Activated CD4-positive, alpha-beta T cell treated with anti-CD3 and anti-CD28 coated beads for 36 hours (primary cell): ENCODE measurements at regions of chr15 and their contacts with region 1.

Region 1: DNA sequence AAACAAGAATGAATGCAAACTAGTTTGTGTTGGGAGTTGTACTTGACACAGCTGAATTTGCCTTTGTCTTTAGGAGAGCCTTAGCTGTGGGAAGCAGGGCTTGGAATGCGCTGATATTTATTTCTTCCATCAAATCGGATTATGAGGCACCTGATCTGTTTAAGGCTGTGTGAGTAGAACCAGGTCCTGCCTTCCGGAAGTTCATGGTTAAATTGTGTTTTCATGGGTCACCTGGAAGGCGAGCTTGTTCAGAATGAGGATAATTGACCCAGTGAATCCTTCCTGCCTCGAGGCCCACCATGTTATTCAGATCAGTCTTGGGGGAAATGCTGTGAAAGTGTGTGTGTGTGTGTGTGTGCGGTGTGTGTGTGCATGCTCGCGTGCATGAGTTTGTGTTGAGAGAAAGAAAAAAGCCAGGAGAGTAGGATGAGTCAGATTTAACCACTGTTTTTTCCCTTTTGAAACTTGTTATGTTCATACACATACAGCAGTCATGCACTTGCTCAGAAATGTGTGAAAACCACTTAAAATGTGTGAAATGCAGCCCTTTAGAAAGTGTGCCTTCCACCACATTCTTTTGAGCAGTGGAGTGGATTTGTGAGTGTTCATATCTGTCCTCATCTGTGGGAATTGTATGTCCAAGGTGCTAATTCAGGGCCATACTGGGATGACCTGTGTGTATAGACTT is 36.7 kb downstream of the SMAD3 start:
- DNase-seq: peak; percentile 65
- ATAC-seq: peak; percentile 40
- H3K4me3 Mint-ChIP-seq: no peak overlapping the region
- H3K27ac Mint-ChIP-seq: no peak overlapping the region
- H3K4me1 Mint-ChIP-seq: peaks cover 32% of the 10 kb centered on the region
- H3K27me3 Mint-ChIP-seq: no peaks in the 10 kb centered on the region

Region 2: DNA sequence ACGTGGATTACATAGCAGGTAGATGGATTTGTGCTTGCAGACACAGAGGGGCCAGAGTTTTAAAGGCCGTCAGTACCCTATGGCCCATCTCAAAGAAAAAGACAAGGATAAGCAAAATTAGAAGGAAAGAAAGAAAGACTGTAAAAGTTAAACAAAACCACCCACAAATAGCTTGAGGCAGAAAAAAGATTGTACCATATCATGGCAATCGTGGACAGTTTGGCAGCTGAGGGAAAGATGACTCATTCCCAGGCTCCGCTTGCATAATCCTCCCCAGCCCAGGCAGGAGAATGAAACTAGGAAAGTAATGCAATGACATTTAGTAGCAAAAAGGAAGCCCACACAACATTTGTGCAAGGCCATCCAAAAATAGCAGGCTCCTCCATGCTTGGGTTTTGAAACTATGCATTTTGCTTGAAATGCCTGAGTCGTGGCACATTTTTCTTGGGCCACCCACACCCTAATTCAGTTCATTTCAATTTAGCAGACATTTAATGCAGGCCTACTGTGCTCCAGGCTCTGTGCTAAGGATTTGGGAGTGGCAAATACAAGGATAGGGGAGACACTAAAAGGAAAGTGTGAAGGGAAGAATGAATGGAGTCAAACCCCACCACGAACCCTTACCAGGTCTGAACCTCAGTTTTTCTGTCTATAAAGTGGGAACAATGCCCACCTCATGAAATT is 77.6 kb before region 1 on chr15:
- CTCF ChIA-PET with region 1: no interaction called
- POLR2A ChIA-PET with region 1: interaction called, 6 read pairs
- intact Hi-C with region 1: loop called (anchors 1 to 5 kb)
- DNase-seq: peak; percentile 75
- ATAC-seq: peak; percentile 68
- H3K4me3 Mint-ChIP-seq: no peak overlapping the region
- H3K27ac Mint-ChIP-seq: peak overlapping the region; percentile 53
- H3K4me1 Mint-ChIP-seq: peaks cover 34% of the 10 kb centered on the region
- H3K27me3 Mint-ChIP-seq: peaks cover 6% of the 10 kb centered on the region

Region 3: GRCh38 chr15:67085818-67086636 is 16.0 kb before region 1 on chr15:
- CTCF ChIA-PET with region 1: interaction called, 25 read pairs
- POLR2A ChIA-PET with region 1: interaction called, 34 read pairs
- intact Hi-C with region 1: loop called (anchors 1 kb)
- DNase-seq: peak; percentile 53
- ATAC-seq: peak; percentile 40
- H3K4me3 Mint-ChIP-seq: peak overlapping the region; percentile 52
- H3K27ac Mint-ChIP-seq: peak overlapping the region; percentile 82
- H3K4me1 Mint-ChIP-seq: peaks cover 97% of the 10 kb centered on the region
- H3K27me3 Mint-ChIP-seq: no peaks in the 10 kb centered on the region

Region 4: GRCh38 chr15:67120839-67121643 is 19.0 kb after region 1 on chr15:
- CTCF ChIA-PET with region 1: interaction called, 16 read pairs
- POLR2A ChIA-PET with region 1: interaction called, 7 read pairs
- intact Hi-C with region 1: loop called in 1 of 2 experiments (anchors 1 kb)
- DNase-seq: peak; percentile 93
- ATAC-seq: peak; percentile 88
- H3K4me3 Mint-ChIP-seq: peak overlapping the region; percentile 70
- H3K27ac Mint-ChIP-seq: peak overlapping the region; percentile 98
- H3K4me1 Mint-ChIP-seq: peaks cover 82% of the 10 kb centered on the region
- H3K27me3 Mint-ChIP-seq: no peaks in the 10 kb centered on the region

Region 5: DNA sequence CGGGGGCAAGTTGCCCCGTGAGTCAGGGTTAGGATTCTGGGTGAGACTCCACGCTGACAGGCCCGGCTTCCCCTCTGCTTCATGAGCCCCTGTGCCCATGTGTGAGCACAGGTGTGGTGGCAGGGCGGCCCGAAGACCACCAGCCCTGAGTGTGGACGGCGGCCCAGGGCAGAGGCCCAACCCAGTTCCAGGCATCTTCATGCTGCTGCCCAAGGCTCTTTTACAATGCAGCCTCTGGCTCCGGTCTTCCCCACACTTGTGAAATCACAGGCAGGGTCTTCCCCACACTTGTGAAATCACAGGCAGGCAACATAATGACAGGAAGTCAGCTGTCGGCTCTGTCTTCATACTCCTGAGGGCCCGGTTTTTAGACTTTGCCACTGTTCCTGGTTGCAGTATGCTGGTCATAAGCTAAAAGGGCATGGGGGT is 73.6 kb after region 1 on chr15:
- CTCF ChIA-PET with region 1: interaction called, 3 read pairs
- POLR2A ChIA-PET with region 1: interaction called, 4 read pairs
- intact Hi-C with region 1: loop called in 1 of 2 experiments (anchors 1 kb)
- DNase-seq: peak; percentile 75
- ATAC-seq: peak; percentile 76
- H3K4me3 Mint-ChIP-seq: peak overlapping the region; percentile 4
- H3K27ac Mint-ChIP-seq: peak overlapping the region; percentile 92
- H3K4me1 Mint-ChIP-seq: peaks cover 65% of the 10 kb centered on the region
- H3K27me3 Mint-ChIP-seq: no peaks in the 10 kb centered on the region

Region 6: DNA sequence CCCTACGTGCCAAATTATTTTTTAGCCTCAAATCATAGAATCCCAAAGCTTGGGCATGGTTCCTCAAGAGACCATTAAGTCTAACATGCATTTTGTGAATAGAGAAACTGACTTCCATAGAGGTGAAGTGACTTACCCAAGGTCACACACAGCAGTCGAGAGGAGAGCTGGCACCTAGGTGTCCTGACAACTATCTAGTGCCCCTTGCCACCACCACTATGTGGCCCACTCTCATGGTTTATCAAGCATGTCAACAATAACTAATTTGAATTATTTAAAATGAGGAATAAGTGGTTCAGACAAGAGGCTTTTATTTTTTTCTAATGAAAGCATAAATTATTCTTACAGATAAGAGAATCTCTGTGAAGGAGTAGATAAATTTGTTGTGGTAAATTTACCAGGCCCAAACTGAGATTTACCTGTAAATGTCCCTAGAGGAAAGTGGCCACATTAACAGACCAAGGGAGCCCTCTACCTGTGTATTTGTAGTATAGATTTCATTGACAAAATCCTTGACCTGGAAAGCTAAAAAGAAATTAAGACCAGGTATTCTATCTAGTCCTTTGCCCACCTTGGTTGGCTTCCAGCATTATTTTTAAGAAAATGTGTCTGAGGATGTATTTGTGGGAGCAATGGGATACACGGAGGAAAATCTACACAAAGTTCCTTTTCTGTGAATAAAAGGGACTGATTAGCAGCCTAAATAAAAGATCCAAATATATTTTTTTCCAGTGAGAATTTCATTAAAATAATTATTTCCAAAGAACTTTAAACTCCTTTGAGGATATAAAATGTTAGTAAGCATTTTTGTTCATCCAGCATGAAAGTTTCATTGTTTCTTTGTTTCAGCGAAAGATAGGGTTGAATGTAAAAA is 201.7 kb after region 1 on chr15:
- CTCF ChIA-PET with region 1: no interaction called
- POLR2A ChIA-PET with region 1: no interaction called
- intact Hi-C with region 1: loop called (anchors 1 to 5 kb)
- DNase-seq: peak; percentile 22
- ATAC-seq: no peak
- H3K4me3 Mint-ChIP-seq: no peak overlapping the region
- H3K27ac Mint-ChIP-seq: no peak overlapping the region
- H3K4me1 Mint-ChIP-seq: peaks cover 16% of the 10 kb centered on the region
- H3K27me3 Mint-ChIP-seq: peaks cover 3% of the 10 kb centered on the region